ENCODE measurements at regions of chrX and their contacts with region 1.

Region 1: GRCh38 chrX:74291964-74292807 is 11.8 kb upstream of the ZCCHC13 start:
- DNase-seq: peak; percentile 92
- H3K4me3 Mint-ChIP-seq: peak overlapping the region; percentile 99
- H3K27ac Mint-ChIP-seq: peak overlapping the region; percentile 100
- H3K4me1 Mint-ChIP-seq: peaks cover 15% of the 10 kb centered on the region
- H3K27me3 Mint-ChIP-seq: no peaks in the 10 kb centered on the region

Region 2: GRCh38 chrX:73214426-73215094 is 1077.6 kb before region 1 on chrX and contains the start of gene NAP1L2:
- intact Hi-C with region 1: no loop called
- DNase-seq: peak; percentile 79
- H3K4me3 Mint-ChIP-seq: peak within 1 kb of the TSS; percentile 96
- H3K27ac Mint-ChIP-seq: peak within 1 kb of the TSS; percentile 78
- H3K4me1 Mint-ChIP-seq: peaks cover 11% of the 10 kb centered on the region
- H3K27me3 Mint-ChIP-seq: peaks cover 6% of the 10 kb centered on the region
- total RNA-seq, gene NAP1L2: 1.9 and 2.1 TPM in 2 replicates

Region 3: DNA sequence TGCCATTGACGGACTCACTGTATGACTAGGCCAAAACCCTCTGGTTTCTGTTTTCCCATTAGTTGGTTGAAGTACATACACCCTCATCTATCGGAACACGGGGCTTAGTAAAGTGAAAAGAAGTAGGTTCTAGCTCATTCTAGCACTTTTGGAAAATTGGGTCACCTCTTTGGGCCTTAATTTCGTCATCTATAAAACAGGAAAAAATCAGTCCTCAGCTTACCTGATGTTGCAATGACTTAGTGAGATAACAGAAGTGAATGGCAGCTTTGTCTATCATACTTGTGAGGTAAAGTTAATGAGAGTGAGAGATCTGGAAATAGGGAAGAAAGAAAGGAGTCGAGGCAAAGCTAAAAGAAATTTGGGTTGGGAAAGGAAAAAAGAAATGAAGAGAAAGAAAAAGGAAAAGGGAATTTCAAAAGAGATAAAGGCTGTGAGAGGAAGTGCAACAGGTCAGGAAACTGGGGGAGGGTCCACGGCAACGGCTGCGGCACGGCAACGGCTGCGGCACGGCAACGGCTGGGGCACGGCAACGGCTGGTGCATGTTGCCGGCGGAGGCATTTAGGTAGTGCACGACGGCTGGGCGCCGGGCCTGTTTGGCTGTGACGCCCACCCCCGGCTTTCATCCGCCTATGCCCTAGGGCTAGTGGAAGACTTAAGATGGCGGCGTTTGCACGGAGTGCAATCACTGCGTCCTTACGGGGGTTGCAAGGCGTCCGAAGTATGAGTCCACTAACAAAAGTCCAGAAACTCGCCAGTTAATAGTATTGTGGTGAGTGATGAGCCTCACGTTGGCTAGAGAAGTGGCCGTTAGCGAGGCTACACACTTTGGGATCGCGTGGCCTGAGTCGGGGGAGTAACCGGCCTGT is 348.3 kb before region 1 on chrX:
- intact Hi-C with region 1: loop called (anchors 1 kb)
- DNase-seq: peak; percentile 95
- H3K4me3 Mint-ChIP-seq: peak overlapping the region; percentile 86
- H3K27ac Mint-ChIP-seq: peak overlapping the region; percentile 90
- H3K4me1 Mint-ChIP-seq: peaks cover 18% of the 10 kb centered on the region
- H3K27me3 Mint-ChIP-seq: no peaks in the 10 kb centered on the region

Region 4: DNA sequence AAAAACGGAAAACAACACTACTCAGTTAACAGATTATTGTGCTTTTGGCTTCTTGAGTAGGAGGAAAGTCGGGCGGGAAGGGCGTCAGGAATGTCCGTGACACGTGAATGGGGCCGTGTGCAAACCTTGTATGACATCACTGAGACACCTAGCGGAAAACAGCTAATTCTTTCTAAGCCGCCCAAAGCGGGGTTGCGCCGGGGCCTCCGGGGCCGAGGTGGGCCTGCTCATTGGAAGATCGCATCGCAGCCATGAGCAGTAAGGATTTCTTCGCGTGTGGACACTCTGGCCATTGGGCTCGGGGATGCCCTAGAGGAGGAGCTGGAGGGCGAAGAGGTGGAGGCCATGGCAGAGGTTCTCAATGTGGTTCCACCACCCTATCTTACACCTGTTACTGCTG is 11.8 kb after region 1 on chrX and contains the start of gene ZCCHC13:
- intact Hi-C with region 1: no loop called
- DNase-seq: no peak
- H3K4me3 Mint-ChIP-seq: no peak within 1 kb of the TSS
- H3K27ac Mint-ChIP-seq: no peak within 1 kb of the TSS
- H3K4me1 Mint-ChIP-seq: no peaks in the 10 kb centered on the region
- H3K27me3 Mint-ChIP-seq: peaks cover 3% of the 10 kb centered on the region
- total RNA-seq, gene ZCCHC13: not detected in 2 replicates

Region 5: GRCh38 chrX:74536152-74536831 is 244.1 kb after region 1 on chrX:
- intact Hi-C with region 1: loop called (anchors 2 kb)
- DNase-seq: peak; percentile 75
- H3K4me3 Mint-ChIP-seq: peak overlapping the region; percentile 78
- H3K27ac Mint-ChIP-seq: peak overlapping the region; percentile 82
- H3K4me1 Mint-ChIP-seq: peaks cover 20% of the 10 kb centered on the region
- H3K27me3 Mint-ChIP-seq: no peaks in the 10 kb centered on the region

Region 6: GRCh38 chrX:74593593-74593992 is 301.4 kb after region 1 on chrX:
- intact Hi-C with region 1: no loop called
- DNase-seq: no peak
- H3K4me3 Mint-ChIP-seq: no peak overlapping the region
- H3K27ac Mint-ChIP-seq: no peak overlapping the region
- H3K4me1 Mint-ChIP-seq: peaks cover 4% of the 10 kb centered on the region
- H3K27me3 Mint-ChIP-seq: no peaks in the 10 kb centered on the region

Region 7: GRCh38 chrX:74614093-74614909 is 322.1 kb after region 1 on chrX and contains the start of gene RLIM:
- intact Hi-C with region 1: loop called (anchors 1 kb)
- DNase-seq: peak; percentile 97
- H3K4me3 Mint-ChIP-seq: peak within 1 kb of the TSS; percentile 100
- H3K27ac Mint-ChIP-seq: peak within 1 kb of the TSS; percentile 100
- H3K4me1 Mint-ChIP-seq: peaks cover 8% of the 10 kb centered on the region
- H3K27me3 Mint-ChIP-seq: no peaks in the 10 kb centered on the region
- total RNA-seq, gene RLIM: 34.2 and 34.5 TPM in 2 replicates

Region 8: DNA sequence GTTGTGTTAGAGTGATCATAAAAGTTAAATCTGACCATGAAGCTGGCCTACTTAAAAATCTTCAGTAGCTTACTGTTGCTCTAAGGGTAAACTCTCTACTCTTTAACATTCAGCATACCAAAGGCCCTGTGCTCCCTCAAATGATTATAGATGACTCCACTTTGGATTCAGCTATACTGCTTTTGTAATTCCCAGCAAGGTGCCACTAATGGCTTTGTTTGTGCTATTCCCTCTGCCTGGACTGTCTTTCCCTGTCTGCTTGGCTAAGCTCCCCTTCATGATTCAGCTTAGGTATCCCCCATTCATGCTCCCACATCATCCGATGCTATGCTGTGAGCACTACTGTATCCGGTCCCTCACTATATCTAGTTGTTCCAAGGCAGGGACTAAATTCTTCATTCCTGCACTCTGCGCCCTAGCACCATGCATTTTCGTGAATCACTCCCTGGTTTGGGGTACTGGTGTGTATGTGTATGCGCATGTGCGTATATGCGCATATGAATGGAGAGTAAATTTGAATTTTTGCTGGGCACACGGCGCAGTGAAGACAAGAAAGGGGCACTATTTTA is 1880.2 kb after region 1 on chrX:
- intact Hi-C with region 1: loop called (anchors 5 kb)
- DNase-seq: no peak
- H3K4me3 Mint-ChIP-seq: peak overlapping the region; percentile 94
- H3K27ac Mint-ChIP-seq: peak overlapping the region; percentile 99
- H3K4me1 Mint-ChIP-seq: peaks cover 37% of the 10 kb centered on the region
- H3K27me3 Mint-ChIP-seq: no peaks in the 10 kb centered on the region

Measured in activated CD4-positive, alpha-beta T cell treated with anti-CD3 and anti-CD28 coated beads, Interleukin-2, amount 10 ng/mL, durations not matched to agents 24 days and 14 days (primary cell).